GM12878 (cell line): ENCODE measurements at regions of chr16 and their contacts with region 1.

Region 1: GRCh38 chr16:56888806-56889205 is 23.8 kb downstream of the SLC12A3 start:
- DNase-seq: peak; percentile 61
- ATAC-seq: peak; percentile 94
- H3K4me3 ChIP-seq: no peak overlapping the region
- H3K27ac ChIP-seq: no peak overlapping the region
- H3K4me1 ChIP-seq: peaks cover 8% of the 10 kb centered on the region
- H3K27me3 ChIP-seq: no peaks in the 10 kb centered on the region
- CTCF ChIP-seq: peak in 2 of 3 experiments; percentile 15 to 27; a peak in 2 of 6 replicates
- EP300 ChIP-seq: peak in 1 of 2 experiments; percentile 57; a peak in 1 of 4 replicates
- POLR2A ChIP-seq: no peak
- RAD21 ChIP-seq: 0 out of 2 replicates have a peak, but pooled peaks have one; percentile 37

Region 2: GRCh38 chr16:56814537-56815432 is 74.0 kb before region 1 on chr16:
- CTCF ChIA-PET with region 1: no interaction called
- POLR2A ChIA-PET with region 1: no interaction called
- RAD21 ChIA-PET with region 1: no interaction called
- SMC1A ChIA-PET with region 1: no interaction called
- in situ Hi-C with region 1: no loop called
- intact Hi-C with region 1: no loop called
- DNase-seq: no peak
- ATAC-seq: no peak
- H3K4me3 ChIP-seq: no peak overlapping the region
- H3K27ac ChIP-seq: no peak overlapping the region
- H3K4me1 ChIP-seq: no peaks in the 10 kb centered on the region
- H3K27me3 ChIP-seq: no peaks in the 10 kb centered on the region
- CTCF ChIP-seq: no peak
- EP300 ChIP-seq: no peak
- POLR2A ChIP-seq: no peak
- RAD21 ChIP-seq: no peak

Region 3: GRCh38 chr16:56874800-56875199 is 14.0 kb before region 1 on chr16:
- CTCF ChIA-PET with region 1: interaction called, 10 read pairs
- POLR2A ChIA-PET with region 1: interaction called, 3 read pairs
- RAD21 ChIA-PET with region 1: interaction called, 5 read pairs
- SMC1A ChIA-PET with region 1: interaction called, 15 read pairs
- in situ Hi-C with region 1: no loop called
- intact Hi-C with region 1: loop called (anchors 2 kb)
- DNase-seq: no peak
- ATAC-seq: no peak
- H3K4me3 ChIP-seq: no peak overlapping the region
- H3K27ac ChIP-seq: no peak overlapping the region
- H3K4me1 ChIP-seq: peaks cover 29% of the 10 kb centered on the region
- H3K27me3 ChIP-seq: no peaks in the 10 kb centered on the region
- CTCF ChIP-seq: no peak
- EP300 ChIP-seq: no peak
- POLR2A ChIP-seq: no peak
- RAD21 ChIP-seq: no peak